Breast epithelium (tissue), 4 donors: ENCODE measurements at regions of chr18 and their contacts with region 1.

Region 1: DNA sequence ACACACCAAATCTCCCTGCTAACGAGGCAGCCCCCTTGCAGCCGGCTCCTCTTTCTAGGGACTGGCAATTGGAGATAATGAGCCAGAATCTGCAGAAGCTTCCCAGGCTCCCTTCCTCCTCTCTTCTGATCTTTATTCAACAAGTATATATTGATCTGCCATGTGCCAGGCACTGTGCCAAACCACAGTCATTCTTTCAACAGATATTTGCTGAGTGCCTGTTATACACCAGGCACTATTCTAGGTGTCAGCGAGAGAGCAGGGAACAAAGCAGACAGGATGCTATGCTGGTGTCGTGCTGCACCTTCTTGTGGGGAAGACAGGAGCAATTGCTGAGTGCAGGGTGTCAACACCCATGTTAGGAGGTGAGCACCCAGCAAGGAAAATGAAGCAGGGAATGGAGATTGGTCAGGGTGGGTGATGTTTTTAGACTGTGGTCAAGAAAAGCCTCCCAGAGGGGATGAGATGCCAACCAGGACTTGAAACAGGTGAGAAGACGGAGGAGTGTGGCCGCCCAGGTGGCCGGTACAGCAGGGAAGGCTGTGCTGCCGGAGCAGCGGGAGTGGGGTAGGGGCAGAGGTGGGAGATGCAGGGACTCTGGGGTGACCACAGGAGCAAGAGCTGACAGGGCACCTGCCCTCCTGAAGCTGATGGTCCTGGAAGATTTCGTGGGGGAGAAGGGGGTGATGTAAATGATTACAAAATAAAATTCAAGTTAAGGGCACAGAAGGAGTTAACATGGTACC is 307.6 kb upstream of the RAB12 start:
- DNase-seq: no peak
- H3K4me3 ChIP-seq: no peak overlapping the region
- H3K27ac ChIP-seq: no peak overlapping the region
- H3K4me1 ChIP-seq: no peaks in the 10 kb centered on the region
- H3K27me3 ChIP-seq: no peaks in the 10 kb centered on the region
- CTCF ChIP-seq: no peak
- POLR2A ChIP-seq: no peak

Region 2: DNA sequence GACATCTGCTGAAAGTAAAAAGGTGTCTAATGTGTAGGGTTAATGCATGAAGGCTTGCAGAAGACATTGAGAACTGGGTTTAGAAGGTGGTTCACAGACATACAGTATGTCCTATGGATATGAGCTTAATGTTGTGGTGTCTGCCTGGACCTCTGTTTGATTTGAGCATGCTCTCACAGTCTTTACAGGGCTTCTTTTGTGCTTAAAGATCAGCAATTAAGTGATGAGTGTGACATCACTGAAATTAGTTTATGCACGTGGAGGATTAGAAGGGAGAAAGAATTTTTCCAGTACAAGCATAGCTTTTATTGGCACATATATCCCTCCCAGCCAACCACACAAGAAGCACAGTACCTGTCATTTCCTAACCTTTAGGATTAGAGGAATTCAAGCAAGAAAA is 59.9 kb before region 1 on chr18:
- intact Hi-C with region 1: loop called (anchors 2 kb)
- DNase-seq: no peak
- H3K4me3 ChIP-seq: no peak overlapping the region
- H3K27ac ChIP-seq: no peak overlapping the region
- H3K4me1 ChIP-seq: no peaks in the 10 kb centered on the region
- H3K27me3 ChIP-seq: no peaks in the 10 kb centered on the region
- CTCF ChIP-seq: no peak
- POLR2A ChIP-seq: no peak